PC-3 (cell line): ENCODE measurements at regions of chr9 and their contacts with region 1.

Region 1: DNA sequence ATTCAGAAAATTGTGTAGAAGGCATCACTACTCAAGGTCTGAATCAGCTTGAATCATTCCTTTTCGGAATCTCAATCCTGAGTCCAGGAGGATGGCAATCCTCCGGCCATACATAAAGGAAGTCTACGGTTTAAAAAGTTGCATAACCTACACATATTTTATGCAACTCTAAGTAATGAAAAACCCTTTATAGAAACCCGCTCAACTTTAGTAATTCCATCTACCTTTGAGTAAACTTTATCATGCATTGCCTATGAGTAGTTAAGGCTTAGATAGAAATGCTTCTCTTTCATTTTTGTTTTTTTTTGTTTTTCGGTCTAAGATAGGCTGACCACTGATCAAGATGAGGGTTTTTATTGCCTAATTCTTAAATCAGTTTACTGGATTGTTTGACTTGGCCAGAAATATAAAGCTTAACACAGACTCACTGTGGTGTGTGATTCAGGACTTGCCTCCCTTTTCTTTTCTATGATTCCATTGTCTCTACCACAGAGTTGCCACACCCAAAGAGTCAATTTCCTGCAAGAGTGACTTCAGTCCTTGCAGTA is 85.0 kb downstream of the LURAP1L start:
- DNase-seq: peak; percentile 90
- ATAC-seq: peak; percentile 95
- H3K4me3 ChIP-seq: peak overlapping the region; percentile 56
- H3K27ac ChIP-seq: peak overlapping the region; percentile 100
- H3K4me1 ChIP-seq: peaks cover 34% of the 10 kb centered on the region
- H3K27me3 ChIP-seq: no peaks in the 10 kb centered on the region
- CTCF ChIP-seq: no peak

Region 2: GRCh38 chr9:12784461-12785259 is 75.1 kb before region 1 on chr9:
- CTCF ChIA-PET with region 1: no interaction called
- POLR2A ChIA-PET with region 1: interaction called, 5 read pairs
- intact Hi-C with region 1: loop called (anchors 5 kb)
- DNase-seq: peak; percentile 96
- ATAC-seq: peak; percentile 93
- H3K4me3 ChIP-seq: peak overlapping the region; percentile 60
- H3K27ac ChIP-seq: peak overlapping the region; percentile 100
- H3K4me1 ChIP-seq: peaks cover 34% of the 10 kb centered on the region
- H3K27me3 ChIP-seq: no peaks in the 10 kb centered on the region
- CTCF ChIP-seq: no peak

Region 3: GRCh38 chr9:12849486-12850004 is 10.2 kb before region 1 on chr9:
- CTCF ChIA-PET with region 1: no interaction called
- POLR2A ChIA-PET with region 1: no interaction called
- intact Hi-C with region 1: loop called (anchors 1 kb)
- DNase-seq: peak; percentile 39
- ATAC-seq: peak; percentile 61
- H3K4me3 ChIP-seq: no peak overlapping the region
- H3K27ac ChIP-seq: peak overlapping the region; percentile 86
- H3K4me1 ChIP-seq: peaks cover 34% of the 10 kb centered on the region
- H3K27me3 ChIP-seq: no peaks in the 10 kb centered on the region
- CTCF ChIP-seq: no peak

Region 4: DNA sequence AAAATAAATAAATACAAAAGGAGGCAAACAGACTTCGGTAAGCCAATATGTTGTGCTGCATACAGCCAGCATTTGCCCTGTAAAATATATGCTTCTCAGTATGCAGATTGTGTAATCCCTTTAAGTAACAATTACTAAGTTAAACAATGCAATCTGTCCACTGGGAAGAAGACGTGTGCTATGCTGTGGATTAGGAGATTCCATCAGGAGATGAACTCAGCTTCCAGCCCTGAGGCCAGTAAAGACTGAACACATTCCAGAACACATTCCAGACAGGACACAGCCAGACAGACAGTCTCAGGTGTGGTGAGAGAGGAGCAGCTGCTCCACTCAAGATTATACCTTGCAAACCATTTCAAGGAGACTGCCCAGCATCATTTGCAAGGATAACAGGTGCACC is 321.9 kb after region 1 on chr9:
- CTCF ChIA-PET with region 1: no interaction called
- POLR2A ChIA-PET with region 1: no interaction called
- intact Hi-C with region 1: no loop called
- DNase-seq: peak; percentile 72
- ATAC-seq: peak; percentile 73
- H3K4me3 ChIP-seq: no peak overlapping the region
- H3K27ac ChIP-seq: no peak overlapping the region
- H3K4me1 ChIP-seq: peaks cover 12% of the 10 kb centered on the region
- H3K27me3 ChIP-seq: no peaks in the 10 kb centered on the region
- CTCF ChIP-seq: no peak